ENCODE measurements at regions of chr16 and their contacts with region 1.

Region 1: GRCh38 chr16:2023098-2023925 is 3.4 kb upstream of the NHERF2 start:
- DNase-seq: peak; percentile 79
- ATAC-seq: peak; percentile 84
- H3K4me3 ChIP-seq: peak overlapping the region; percentile 33
- H3K27ac ChIP-seq: peak overlapping the region; percentile 76
- H3K4me1 ChIP-seq: peaks cover 15% of the 10 kb centered on the region
- H3K27me3 ChIP-seq: peaks cover 18% of the 10 kb centered on the region; the same call in 1 of the 2 replicates
- CTCF ChIP-seq: peak; percentile 98
- POLR2A ChIP-seq: no peak
- RAD21 ChIP-seq: peak; percentile 98

Region 2: DNA sequence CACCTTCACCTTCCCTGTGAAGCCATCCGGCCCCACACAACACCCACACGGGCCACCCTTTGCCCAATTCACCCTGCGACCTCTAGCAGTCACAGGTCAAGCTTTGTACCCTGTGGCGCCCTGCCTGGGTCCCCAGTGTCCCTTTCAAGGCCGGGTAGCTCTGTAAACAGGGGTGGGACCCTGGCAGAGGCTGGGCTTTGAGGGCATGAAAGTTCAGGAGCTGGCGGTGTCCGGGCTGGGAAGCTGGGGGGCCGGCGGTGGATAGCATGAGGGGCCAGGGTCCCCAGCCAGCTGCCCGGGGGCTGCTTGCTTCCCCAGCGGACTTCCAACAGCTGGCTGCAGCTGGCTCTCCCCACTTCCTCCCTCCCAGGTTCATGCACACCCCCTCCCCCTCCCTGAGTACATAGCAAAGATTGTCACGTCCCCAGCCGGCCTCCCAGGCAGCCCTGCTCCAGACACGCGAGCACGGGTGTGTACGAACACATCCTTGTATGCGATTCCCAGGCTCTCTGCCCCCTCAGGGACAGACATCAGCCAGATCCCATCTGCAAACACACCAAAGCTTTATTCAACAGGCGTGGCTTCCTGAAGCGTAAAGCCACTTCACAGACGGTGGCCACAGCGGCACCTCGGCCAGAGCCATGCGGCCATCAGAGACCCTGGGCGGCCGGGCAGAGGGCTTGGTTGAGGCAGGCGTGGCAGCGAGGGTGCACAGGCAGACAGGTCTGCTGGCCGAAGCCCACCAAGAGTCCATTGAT is 16.1 kb after region 1 on chr16:
- CTCF ChIA-PET with region 1: interaction called, 3 read pairs
- POLR2A ChIA-PET with region 1: interaction called, 4 read pairs
- dilution Hi-C with region 1: no loop called
- in situ Hi-C with region 1: no loop called
- intact Hi-C with region 1: loop called (anchors 1 kb)
- DNase-seq: peak; percentile 93
- ATAC-seq: peak; percentile 70
- H3K4me3 ChIP-seq: no peak overlapping the region
- H3K27ac ChIP-seq: peak overlapping the region; percentile 93
- H3K4me1 ChIP-seq: peaks cover 59% of the 10 kb centered on the region
- H3K27me3 ChIP-seq: no peaks in the 10 kb centered on the region
- CTCF ChIP-seq: no peak
- POLR2A ChIP-seq: peak; percentile 33; the same call in 1 of the 2 replicates
- RAD21 ChIP-seq: 0 out of 2 replicates have a peak, but pooled peaks have one; percentile 4

Region 3: GRCh38 chr16:2047330-2048115 is 24.2 kb after region 1 on chr16 and contains the starts of genes NTHL1 and TSC2:
- CTCF ChIA-PET with region 1: interaction called, 4 read pairs
- POLR2A ChIA-PET with region 1: no interaction called
- dilution Hi-C with region 1: no loop called
- in situ Hi-C with region 1: no loop called
- intact Hi-C with region 1: loop called (anchors 1 kb)
- DNase-seq: peak; percentile 95
- ATAC-seq: peak; percentile 98
- H3K4me3 ChIP-seq: peak within 1 kb of the TSS; percentile 67
- H3K27ac ChIP-seq: peak within 1 kb of the TSS; percentile 34
- H3K4me1 ChIP-seq: peaks cover 11% of the 10 kb centered on the region
- H3K27me3 ChIP-seq: no peaks in the 10 kb centered on the region
- CTCF ChIP-seq: peak; percentile 45
- POLR2A ChIP-seq: no peak
- RAD21 ChIP-seq: no peak
- total RNA-seq, gene NTHL1: 22.8 and 28.1 TPM in 2 replicates
- total RNA-seq, gene TSC2: 22.8 and 31.4 TPM in 2 replicates

Region 4: DNA sequence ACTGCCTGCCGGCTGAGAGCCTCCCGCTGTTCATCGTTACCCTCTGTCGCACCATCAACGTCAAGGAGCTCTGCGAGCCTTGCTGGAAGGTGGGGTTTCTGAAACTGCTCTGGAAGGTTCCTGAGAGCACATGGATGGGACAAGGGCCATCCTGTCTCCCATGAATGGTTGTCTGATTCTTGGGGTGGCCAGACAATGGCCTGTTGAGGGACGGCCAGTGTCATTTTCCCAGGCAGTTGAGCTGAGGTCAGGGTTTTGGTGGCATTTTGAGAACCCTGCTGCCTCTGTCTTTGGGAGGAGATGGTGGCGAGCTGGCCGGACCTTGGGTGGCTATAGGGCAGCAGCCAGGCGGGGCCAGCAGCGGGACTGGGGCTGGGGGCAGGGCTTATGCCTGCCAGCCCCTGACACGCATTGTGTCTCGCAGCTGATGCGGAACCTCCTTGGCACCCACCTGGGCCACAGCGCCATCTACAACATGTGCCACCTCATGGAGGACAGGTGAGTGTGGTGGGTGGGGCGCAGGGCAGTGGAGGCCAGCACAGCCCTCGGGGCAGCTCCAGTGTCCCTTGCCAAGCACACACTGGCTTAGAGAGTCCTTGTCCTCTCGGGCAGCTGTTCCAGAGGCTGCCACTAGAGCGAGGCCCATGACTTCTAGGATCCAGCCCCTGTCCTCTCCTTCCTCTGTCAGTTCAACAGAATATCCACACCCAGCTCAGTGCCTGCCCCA is 33.5 kb after region 1 on chr16:
- CTCF ChIA-PET with region 1: no interaction called
- POLR2A ChIA-PET with region 1: no interaction called
- dilution Hi-C with region 1: no loop called
- in situ Hi-C with region 1: no loop called
- intact Hi-C with region 1: loop called (anchors 1 kb)
- DNase-seq: no peak
- ATAC-seq: no peak
- H3K4me3 ChIP-seq: no peak overlapping the region
- H3K27ac ChIP-seq: no peak overlapping the region
- H3K4me1 ChIP-seq: no peaks in the 10 kb centered on the region
- H3K27me3 ChIP-seq: no peaks in the 10 kb centered on the region
- CTCF ChIP-seq: no peak
- POLR2A ChIP-seq: no peak
- RAD21 ChIP-seq: no peak

Region 5: DNA sequence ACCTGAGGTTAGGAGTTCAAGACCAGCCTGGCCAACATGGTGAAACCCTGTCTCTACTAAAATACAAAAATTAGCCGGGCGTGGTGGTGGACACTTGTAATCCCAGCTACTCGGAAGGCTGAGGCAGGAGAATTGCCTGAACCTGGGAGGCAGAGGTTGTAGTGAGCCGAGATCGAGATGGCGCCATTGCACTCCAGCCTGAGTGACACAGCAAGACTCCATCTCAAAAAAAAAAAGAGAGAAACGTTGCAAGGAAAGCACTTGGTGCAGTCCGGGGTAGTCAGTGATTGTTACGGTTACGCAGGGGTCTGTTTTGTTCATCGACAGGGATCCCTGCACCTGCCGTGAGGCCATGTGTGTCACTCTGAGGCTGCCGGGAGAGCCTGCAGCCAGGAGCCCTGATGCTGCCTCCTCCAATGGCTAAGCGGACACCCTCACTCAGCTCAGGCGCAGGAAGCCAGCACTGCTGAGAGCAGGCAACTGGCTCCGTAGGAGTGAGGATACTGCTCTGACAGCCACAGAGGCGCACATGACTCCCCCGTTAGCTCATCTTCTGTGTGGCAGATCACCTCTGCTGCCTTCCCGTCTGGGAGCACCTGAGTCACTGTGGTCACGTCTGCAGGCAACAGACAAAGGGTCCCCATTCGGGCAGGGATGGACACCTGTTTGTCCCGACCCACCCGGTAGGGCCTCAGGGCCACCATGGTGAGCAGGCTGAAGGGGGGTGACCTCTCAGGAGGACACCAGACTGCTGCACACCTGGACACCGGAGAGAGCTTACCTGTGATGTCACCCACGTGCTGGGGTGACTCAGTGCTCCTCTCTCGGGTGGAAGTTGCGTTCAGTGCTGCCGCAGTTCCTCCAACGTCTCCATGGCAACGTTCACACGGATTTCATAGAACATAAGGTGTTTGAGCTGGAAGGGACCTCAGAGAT is 119.9 kb after region 1 on chr16:
- CTCF ChIA-PET with region 1: interaction called, 10 read pairs
- POLR2A ChIA-PET with region 1: no interaction called
- dilution Hi-C with region 1: no loop called
- in situ Hi-C with region 1: loop called (anchors 5 kb)
- intact Hi-C with region 1: loop called (anchors 1 kb)
- DNase-seq: no peak
- ATAC-seq: no peak
- H3K4me3 ChIP-seq: no peak overlapping the region
- H3K27ac ChIP-seq: no peak overlapping the region
- H3K4me1 ChIP-seq: peaks cover 5% of the 10 kb centered on the region
- H3K27me3 ChIP-seq: no peaks in the 10 kb centered on the region
- CTCF ChIP-seq: no peak
- POLR2A ChIP-seq: no peak
- RAD21 ChIP-seq: no peak

Measured in IMR-90 (cell line).